ENCODE measurements at regions of chr1 and their contacts with region 1.

Region 1: GRCh38 chr1:160006312-160006940 is 25.4 kb downstream of the PIGM start:
- DNase-seq: peak; percentile 47 to 83 (median 75)
- ATAC-seq: peak; percentile 95
- H3K4me3 ChIP-seq: no peak overlapping the region
- H3K4me3 Mint-ChIP-seq: no peak overlapping the region
- H3K27ac ChIP-seq: no peak overlapping the region
- H3K27ac Mint-ChIP-seq: no peak overlapping the region
- H3K4me1 ChIP-seq: no peaks in the 10 kb centered on the region
- H3K4me1 Mint-ChIP-seq: no peaks in the 10 kb centered on the region
- H3K27me3 ChIP-seq: no peaks in the 10 kb centered on the region
- H3K27me3 Mint-ChIP-seq: peaks cover 2% of the 10 kb centered on the region
- CTCF ChIP-seq: peak; percentile 90

Region 2: DNA sequence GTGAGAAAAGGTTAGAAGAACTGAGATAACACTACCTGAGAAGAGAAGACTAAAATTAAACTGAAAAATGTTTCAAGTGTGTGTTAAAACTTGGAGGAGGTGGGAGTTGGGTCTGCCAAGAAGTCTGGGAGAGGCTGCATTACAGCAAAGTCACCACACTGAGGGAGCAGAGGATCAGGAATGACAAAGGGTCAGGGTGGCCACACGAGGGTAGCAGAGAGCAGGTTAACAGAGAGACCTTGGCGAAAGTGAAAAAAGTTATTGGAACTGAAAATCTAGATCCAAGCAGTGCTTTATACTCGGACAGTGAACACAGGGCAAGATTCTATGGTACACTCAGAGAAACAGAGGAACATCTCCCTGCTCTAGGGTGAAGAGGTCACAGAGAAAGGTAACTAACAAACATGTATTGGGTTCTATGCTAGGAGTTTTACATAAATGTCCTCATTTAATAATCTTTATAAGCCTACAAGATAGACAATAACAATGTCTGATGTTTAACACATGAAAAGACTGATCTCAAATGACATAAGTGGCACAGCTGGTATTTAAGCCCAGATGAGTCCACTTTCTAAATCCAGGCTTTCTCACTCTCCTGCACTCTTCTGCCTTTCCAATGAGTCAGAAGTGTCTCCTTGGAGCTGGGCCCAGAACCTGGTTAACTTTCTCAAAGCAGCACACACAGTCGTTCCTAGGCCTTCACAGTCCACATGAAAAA is 845.3 kb before region 1 on chr1:
- CTCF ChIA-PET with region 1: interaction called, 3 read pairs
- POLR2A ChIA-PET with region 1: no interaction called
- intact Hi-C with region 1: loop called in 1 of 2 experiments (anchors 1 kb)
- DNase-seq: peak; percentile 28 to 75 (median 63)
- ATAC-seq: peak; percentile 75
- H3K4me3 ChIP-seq: no peak overlapping the region
- H3K4me3 Mint-ChIP-seq: no peak overlapping the region
- H3K27ac ChIP-seq: no peak overlapping the region
- H3K27ac Mint-ChIP-seq: no peak overlapping the region
- H3K4me1 ChIP-seq: no peaks in the 10 kb centered on the region
- H3K4me1 Mint-ChIP-seq: peaks cover 2% of the 10 kb centered on the region
- H3K27me3 ChIP-seq: peaks cover 0 to 4% of the 10 kb centered on the region in 2 experiments
- H3K27me3 Mint-ChIP-seq: peaks cover 47% of the 10 kb centered on the region
- CTCF ChIP-seq: peak; percentile 79

Region 3: GRCh38 chr1:159798893-159799292 is 207.5 kb before region 1 on chr1:
- CTCF ChIA-PET with region 1: interaction called, 6 read pairs
- POLR2A ChIA-PET with region 1: no interaction called
- intact Hi-C with region 1: loop called (anchors 1 to 2 kb)
- DNase-seq: peak; percentile 6 to 77 (median 46)
- ATAC-seq: no peak
- H3K4me3 ChIP-seq: no peak overlapping the region
- H3K4me3 Mint-ChIP-seq: no peak overlapping the region
- H3K27ac ChIP-seq: no peak overlapping the region
- H3K27ac Mint-ChIP-seq: no peak overlapping the region
- H3K4me1 ChIP-seq: peaks cover 22% of the 10 kb centered on the region
- H3K4me1 Mint-ChIP-seq: peaks cover 46% of the 10 kb centered on the region
- H3K27me3 ChIP-seq: no peaks in the 10 kb centered on the region
- H3K27me3 Mint-ChIP-seq: peaks cover 1% of the 10 kb centered on the region
- CTCF ChIP-seq: peak; percentile 68

Region 4: GRCh38 chr1:159936273-159936904 is 70.0 kb before region 1 on chr1:
- CTCF ChIA-PET with region 1: interaction called, 85 read pairs
- POLR2A ChIA-PET with region 1: no interaction called
- intact Hi-C with region 1: loop called in 1 of 2 experiments (anchors 1 kb)
- DNase-seq: peak; percentile 66 to 90 (median 82)
- ATAC-seq: peak; percentile 96
- H3K4me3 ChIP-seq: no peak overlapping the region
- H3K4me3 Mint-ChIP-seq: no peak overlapping the region
- H3K27ac ChIP-seq: no peak overlapping the region
- H3K27ac Mint-ChIP-seq: no peak overlapping the region
- H3K4me1 ChIP-seq: peaks cover 4% of the 10 kb centered on the region
- H3K4me1 Mint-ChIP-seq: peaks cover 6% of the 10 kb centered on the region
- H3K27me3 ChIP-seq: no peaks in the 10 kb centered on the region
- H3K27me3 Mint-ChIP-seq: peaks cover 11% of the 10 kb centered on the region
- CTCF ChIP-seq: peak; percentile 97

Region 5: DNA sequence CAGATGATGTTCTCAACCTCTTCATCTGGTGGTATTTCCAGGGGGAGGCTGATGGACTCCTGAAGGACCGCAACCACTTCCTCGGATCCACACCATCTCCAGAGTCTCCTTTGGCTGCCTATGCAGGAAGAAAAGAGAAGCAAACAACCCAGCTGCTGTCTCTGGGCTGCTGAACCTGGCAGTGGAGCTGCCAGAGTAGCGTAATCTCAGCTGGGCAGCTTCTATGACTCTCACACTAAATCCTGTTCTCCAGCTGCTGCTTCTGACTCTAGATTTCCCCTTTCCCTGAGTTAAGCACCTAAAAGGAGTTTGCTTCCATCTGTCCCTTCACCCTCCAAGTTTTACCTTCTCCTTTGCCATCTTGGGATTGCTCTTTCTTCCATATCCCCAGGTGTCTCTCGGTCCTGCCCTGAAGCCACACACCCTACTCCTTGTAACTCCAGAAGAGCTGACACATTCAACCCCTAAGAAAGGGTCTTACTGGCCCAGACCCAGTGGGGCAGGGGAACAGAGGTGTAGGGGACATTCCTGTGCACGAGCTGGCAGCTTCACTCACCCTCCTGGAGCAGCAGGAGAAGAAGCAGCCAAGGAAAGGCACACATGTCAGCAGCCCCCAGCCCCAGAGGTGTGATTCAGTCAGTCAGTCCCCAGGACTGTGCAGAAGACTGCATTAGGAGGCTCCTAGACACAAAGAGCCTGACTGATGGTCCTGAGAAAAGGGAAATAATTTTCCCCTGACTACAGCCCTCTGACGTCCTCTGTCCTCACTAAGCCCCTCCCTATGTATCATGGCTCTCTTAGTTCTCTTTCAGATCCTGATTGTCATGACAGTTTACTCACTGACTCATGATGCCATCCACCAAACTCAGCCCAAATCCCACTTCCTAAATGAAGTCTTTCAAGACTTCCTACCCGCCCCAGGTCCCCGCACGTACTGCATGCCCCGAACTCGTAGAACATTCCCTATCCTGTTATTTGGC is 52.6 kb before region 1 on chr1 and contains the start of gene SLAMF9:
- CTCF ChIA-PET with region 1: interaction called, 12 read pairs
- POLR2A ChIA-PET with region 1: no interaction called
- intact Hi-C with region 1: no loop called
- DNase-seq: no peak
- ATAC-seq: no peak
- H3K4me3 ChIP-seq: no peak within 1 kb of the TSS
- H3K4me3 Mint-ChIP-seq: no peak within 1 kb of the TSS
- H3K27ac ChIP-seq: no peak within 1 kb of the TSS
- H3K27ac Mint-ChIP-seq: no peak within 1 kb of the TSS
- H3K4me1 ChIP-seq: no peaks in the 10 kb centered on the region
- H3K4me1 Mint-ChIP-seq: no peaks in the 10 kb centered on the region
- H3K27me3 ChIP-seq: no peaks in the 10 kb centered on the region
- H3K27me3 Mint-ChIP-seq: peaks cover 23% of the 10 kb centered on the region
- CTCF ChIP-seq: no peak
- total RNA-seq, gene SLAMF9: not detected

Region 6: DNA sequence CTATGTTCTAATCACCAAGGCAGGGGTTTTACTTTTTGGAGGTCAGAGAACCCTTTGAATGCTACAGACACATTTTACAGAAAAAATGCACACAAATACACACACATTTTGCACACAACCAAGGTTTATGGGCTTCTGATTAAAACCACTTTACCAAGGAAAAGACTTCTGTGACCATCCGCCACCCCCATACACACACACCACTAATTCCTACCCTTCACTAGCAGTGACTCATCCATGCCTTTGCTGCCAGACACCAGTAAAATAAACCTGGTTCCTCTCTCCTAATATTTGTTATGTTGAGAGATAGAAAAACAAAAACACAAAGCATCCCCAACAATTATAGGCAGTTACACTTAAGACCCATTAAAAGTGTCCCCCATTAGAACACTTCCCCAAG is 12.5 kb after region 1 on chr1:
- CTCF ChIA-PET with region 1: interaction called, 60 read pairs
- POLR2A ChIA-PET with region 1: no interaction called
- intact Hi-C with region 1: no loop called
- DNase-seq: no peak
- ATAC-seq: no peak
- H3K4me3 ChIP-seq: no peak overlapping the region
- H3K4me3 Mint-ChIP-seq: no peak overlapping the region
- H3K27ac ChIP-seq: no peak overlapping the region
- H3K27ac Mint-ChIP-seq: no peak overlapping the region
- H3K4me1 ChIP-seq: no peaks in the 10 kb centered on the region
- H3K4me1 Mint-ChIP-seq: no peaks in the 10 kb centered on the region
- H3K27me3 ChIP-seq: no peaks in the 10 kb centered on the region
- H3K27me3 Mint-ChIP-seq: peaks cover 1% of the 10 kb centered on the region
- CTCF ChIP-seq: no peak

Measured in CD8-positive, alpha-beta T cell (primary cell).